Activated CD8-positive, alpha-beta T cell treated with anti-CD3 and anti-CD28 coated beads for 36 hours (primary cell): ENCODE measurements at regions of chr1 and their contacts with region 1.

Region 1: DNA sequence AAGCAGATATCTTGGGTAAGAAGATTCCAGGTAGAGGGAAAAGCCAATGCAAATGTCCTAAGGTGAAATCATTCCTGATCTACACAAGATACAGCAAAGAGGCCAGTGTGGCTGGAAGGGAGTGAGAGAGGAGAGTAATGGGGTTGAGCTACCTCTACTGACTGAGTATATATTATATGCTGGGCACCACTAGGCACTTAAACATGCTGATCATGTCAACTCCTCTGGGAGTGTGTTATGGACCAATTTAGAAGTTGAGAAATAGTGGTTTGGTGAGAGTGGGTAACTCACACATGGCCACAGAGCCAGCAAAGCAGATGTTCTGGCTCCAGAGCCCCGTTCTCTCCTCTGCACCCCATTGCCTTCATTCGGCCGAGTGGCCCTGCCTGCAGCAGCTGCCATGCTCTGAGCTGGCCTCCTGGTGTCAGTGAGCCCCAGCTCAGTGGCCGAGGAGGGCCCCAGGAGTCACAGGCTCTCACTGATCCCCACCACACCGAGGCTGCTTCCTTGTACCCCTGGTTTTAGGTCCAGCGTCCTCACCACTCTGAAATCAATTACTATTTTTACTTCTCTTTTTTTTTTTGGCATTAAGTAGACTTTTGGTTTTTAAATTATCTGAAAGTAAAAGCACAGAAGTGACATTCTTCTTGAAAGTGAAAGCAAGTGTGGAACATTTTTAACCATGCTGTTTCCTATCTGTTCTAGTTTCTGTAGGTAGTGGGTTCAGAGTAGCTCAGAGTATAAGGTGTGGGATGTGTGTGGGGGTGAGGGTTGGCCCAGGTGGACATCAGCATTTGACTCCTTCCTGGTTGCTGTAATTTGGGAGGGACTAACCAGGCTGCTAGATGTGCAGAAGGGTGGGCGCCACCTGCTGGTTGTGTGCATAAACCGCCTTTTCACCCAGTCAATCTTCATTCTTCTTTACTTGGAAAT is 45.8 kb upstream of the CRNN start:
- DNase-seq: peak; percentile 89
- ATAC-seq: peak; percentile 93
- H3K4me3 Mint-ChIP-seq: peak overlapping the region; percentile 26
- H3K27ac Mint-ChIP-seq: peak overlapping the region; percentile 84
- H3K4me1 Mint-ChIP-seq: peaks cover 31% of the 10 kb centered on the region
- H3K27me3 Mint-ChIP-seq: peaks cover 1% of the 10 kb centered on the region
- CTCF ChIP-seq: peak; percentile 90

Region 2: DNA sequence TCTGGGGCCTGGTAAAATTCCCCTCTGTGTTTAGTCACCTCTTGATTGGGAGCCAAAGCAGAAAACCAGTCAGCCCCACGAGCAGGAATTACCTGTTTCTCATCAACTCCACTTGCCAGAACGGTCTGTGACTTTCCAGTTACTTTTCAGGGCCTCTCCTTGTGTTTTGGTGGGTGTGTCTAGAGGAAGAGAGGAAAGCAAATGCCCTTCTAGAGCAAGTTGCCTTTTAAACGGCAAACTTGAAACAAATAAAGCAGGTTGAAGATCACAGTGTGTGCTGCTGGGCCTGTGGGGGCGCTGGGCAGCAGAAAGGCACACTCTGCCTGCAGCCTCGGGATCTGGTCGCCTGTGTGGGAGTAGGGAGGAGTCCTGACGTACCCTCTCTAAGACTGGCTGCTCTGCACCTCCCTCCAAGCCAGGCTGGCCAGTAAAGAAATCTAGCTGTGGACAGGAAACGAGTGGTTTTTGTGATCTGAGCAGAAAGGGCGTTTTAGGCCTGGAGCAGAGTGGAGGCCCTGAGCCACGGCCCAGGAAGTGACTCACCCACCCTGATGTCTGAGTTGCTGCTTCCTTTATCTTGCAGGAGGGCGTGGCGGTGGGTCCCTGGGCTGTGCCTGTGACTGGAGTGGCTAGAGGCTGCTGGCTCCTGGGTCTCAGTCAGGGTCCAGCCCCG is 412.0 kb before region 1 on chr1:
- CTCF ChIA-PET with region 1: interaction called, 55 read pairs
- POLR2A ChIA-PET with region 1: no interaction called
- intact Hi-C with region 1: loop called (anchors 5 kb)
- DNase-seq: peak; percentile 96
- ATAC-seq: peak; percentile 95
- H3K4me3 Mint-ChIP-seq: peak overlapping the region; percentile 78
- H3K27ac Mint-ChIP-seq: peak overlapping the region; percentile 98
- H3K4me1 Mint-ChIP-seq: peaks cover 17% of the 10 kb centered on the region
- H3K27me3 Mint-ChIP-seq: peaks cover 1% of the 10 kb centered on the region
- CTCF ChIP-seq: peak; percentile 69

Region 3: DNA sequence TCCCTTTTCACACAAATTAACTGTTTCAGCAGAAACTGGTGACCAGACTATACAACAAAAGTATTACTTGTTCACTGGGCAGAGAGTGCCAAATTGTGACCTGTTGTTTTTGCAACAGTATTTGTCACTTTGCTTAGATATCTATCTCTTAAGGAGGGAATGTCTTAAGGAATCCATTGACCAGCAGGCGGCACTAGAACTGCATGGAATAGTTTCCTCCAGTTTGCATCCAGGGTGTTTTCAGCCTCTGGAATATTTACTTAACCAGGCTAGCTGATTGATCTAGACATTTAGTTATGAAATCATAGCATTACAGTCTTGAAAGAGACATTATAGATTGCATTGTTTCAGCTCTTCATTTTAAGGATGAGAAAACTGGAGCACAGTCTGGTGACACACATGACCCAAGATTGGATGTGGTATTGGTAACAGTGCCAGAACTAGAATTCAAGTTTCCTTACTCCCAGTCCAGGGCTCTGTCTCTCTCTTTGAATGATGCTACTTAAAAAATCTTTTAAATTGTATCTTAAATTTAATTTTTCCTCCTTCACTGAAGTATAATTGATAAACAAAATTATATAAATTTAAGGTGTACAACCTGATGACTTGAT is 317.8 kb before region 1 on chr1:
- CTCF ChIA-PET with region 1: interaction called, 10 read pairs
- POLR2A ChIA-PET with region 1: no interaction called
- intact Hi-C with region 1: no loop called
- DNase-seq: peak; percentile 44
- ATAC-seq: no peak
- H3K4me3 Mint-ChIP-seq: no peak overlapping the region
- H3K27ac Mint-ChIP-seq: no peak overlapping the region
- H3K4me1 Mint-ChIP-seq: peaks cover 8% of the 10 kb centered on the region
- H3K27me3 Mint-ChIP-seq: peaks cover 41% of the 10 kb centered on the region
- CTCF ChIP-seq: peak; percentile 61

Region 4: DNA sequence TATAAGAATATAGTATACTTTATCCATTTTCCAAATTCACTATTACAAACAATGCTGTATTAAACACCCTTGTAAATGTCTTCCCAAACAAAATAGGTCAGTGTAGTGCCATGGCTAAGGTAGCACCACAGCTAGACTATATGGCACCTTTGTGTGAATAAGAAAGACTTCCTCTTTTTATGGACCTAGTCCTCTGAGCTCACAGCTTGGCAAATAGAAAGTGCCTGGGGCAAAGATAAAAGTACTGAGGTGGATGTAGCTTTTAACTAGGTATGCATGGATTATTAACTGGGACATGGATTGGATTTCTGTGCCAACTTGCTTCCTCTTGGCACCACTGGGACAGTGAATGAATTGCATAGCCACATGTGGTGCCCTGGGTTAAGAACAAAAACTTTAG is 260.9 kb before region 1 on chr1:
- CTCF ChIA-PET with region 1: interaction called, 11 read pairs
- POLR2A ChIA-PET with region 1: no interaction called
- intact Hi-C with region 1: no loop called
- DNase-seq: no peak
- ATAC-seq: no peak
- H3K4me3 Mint-ChIP-seq: no peak overlapping the region
- H3K27ac Mint-ChIP-seq: no peak overlapping the region
- H3K4me1 Mint-ChIP-seq: no peaks in the 10 kb centered on the region
- H3K27me3 Mint-ChIP-seq: peaks cover 8% of the 10 kb centered on the region
- CTCF ChIP-seq: no peak

Region 5: GRCh38 chr1:152398812-152399698 is 60.8 kb before region 1 on chr1:
- CTCF ChIA-PET with region 1: interaction called, 23 read pairs
- POLR2A ChIA-PET with region 1: interaction called, 3 read pairs
- intact Hi-C with region 1: no loop called
- DNase-seq: peak; percentile 31
- ATAC-seq: no peak
- H3K4me3 Mint-ChIP-seq: no peak overlapping the region
- H3K27ac Mint-ChIP-seq: no peak overlapping the region
- H3K4me1 Mint-ChIP-seq: peaks cover under 1% of the 10 kb centered on the region
- H3K27me3 Mint-ChIP-seq: peaks cover 14% of the 10 kb centered on the region
- CTCF ChIP-seq: peak; percentile 45

Region 6: GRCh38 chr1:152448095-152448494 is 11.8 kb before region 1 on chr1:
- CTCF ChIA-PET with region 1: interaction called, 67 read pairs
- POLR2A ChIA-PET with region 1: no interaction called
- intact Hi-C with region 1: no loop called
- DNase-seq: peak; percentile 9
- ATAC-seq: no peak
- H3K4me3 Mint-ChIP-seq: no peak overlapping the region
- H3K27ac Mint-ChIP-seq: no peak overlapping the region
- H3K4me1 Mint-ChIP-seq: no peaks in the 10 kb centered on the region
- H3K27me3 Mint-ChIP-seq: peaks cover 2% of the 10 kb centered on the region
- CTCF ChIP-seq: no peak

Region 7: GRCh38 chr1:152479792-152480595 is 20.1 kb after region 1 on chr1:
- CTCF ChIA-PET with region 1: interaction called, 32 read pairs
- POLR2A ChIA-PET with region 1: no interaction called
- intact Hi-C with region 1: no loop called
- DNase-seq: peak; percentile 81
- ATAC-seq: peak; percentile 81
- H3K4me3 Mint-ChIP-seq: no peak overlapping the region
- H3K27ac Mint-ChIP-seq: no peak overlapping the region
- H3K4me1 Mint-ChIP-seq: peaks cover 7% of the 10 kb centered on the region
- H3K27me3 Mint-ChIP-seq: no peaks in the 10 kb centered on the region
- CTCF ChIP-seq: peak; percentile 49

Region 8: GRCh38 chr1:152495066-152495675 is 35.3 kb after region 1 on chr1:
- CTCF ChIA-PET with region 1: no interaction called
- POLR2A ChIA-PET with region 1: no interaction called
- intact Hi-C with region 1: no loop called
- DNase-seq: peak; percentile 33
- ATAC-seq: no peak
- H3K4me3 Mint-ChIP-seq: no peak overlapping the region
- H3K27ac Mint-ChIP-seq: no peak overlapping the region
- H3K4me1 Mint-ChIP-seq: no peaks in the 10 kb centered on the region
- H3K27me3 Mint-ChIP-seq: peaks cover 7% of the 10 kb centered on the region
- CTCF ChIP-seq: no peak

Region 9: DNA sequence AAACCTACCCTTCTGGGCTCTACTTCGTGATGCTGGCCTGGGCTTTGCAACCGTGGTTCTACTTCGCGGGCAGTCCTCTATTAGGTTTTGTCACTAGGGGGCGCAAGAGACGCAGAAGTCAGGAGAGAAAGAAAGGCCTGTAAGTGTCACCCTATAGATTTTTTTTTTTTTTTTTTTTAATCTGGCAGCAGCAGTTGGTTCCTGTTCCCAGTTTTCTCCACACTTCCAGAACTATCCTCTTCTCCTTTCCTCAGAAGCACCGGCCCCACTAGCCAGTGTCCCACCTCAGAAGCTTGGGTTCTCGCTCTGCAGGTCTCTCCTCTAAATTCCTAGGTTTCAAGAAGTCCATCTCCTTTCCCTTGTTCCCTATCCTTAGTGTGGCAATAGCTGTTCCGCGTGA is 194.2 kb after region 1 on chr1:
- CTCF ChIA-PET with region 1: no interaction called
- POLR2A ChIA-PET with region 1: no interaction called
- intact Hi-C with region 1: no loop called
- DNase-seq: peak; percentile 70
- ATAC-seq: peak; percentile 45
- H3K4me3 Mint-ChIP-seq: no peak overlapping the region
- H3K27ac Mint-ChIP-seq: no peak overlapping the region
- H3K4me1 Mint-ChIP-seq: no peaks in the 10 kb centered on the region
- H3K27me3 Mint-ChIP-seq: peaks cover 4% of the 10 kb centered on the region
- CTCF ChIP-seq: peak; percentile 77